AG04450 (cell line): ENCODE measurements at regions of chr7 and their contacts with region 1.

Region 1: DNA sequence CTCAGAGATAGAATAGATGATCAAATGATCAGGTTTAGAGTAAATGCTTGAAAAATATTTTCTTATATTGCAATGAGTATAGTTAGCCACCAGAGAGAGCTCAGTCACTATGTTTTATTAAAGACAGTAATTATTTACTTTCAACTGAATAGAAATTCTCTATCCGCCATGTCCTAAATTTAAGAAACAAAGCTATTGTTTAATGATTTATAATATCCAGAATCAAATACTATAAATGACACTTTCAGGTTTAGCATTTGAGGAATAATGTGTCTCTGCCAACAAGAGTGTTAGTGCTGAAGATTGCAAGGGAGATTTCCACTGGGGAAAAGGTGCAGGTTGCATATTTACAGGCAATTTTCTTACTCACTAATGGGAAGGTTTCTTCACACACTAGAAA is 184.7 kb downstream of the DGKB start:
- DNase-seq: no peak
- H3K4me3 ChIP-seq: no peak overlapping the region
- H3K27ac ChIP-seq: no peak overlapping the region
- H3K27me3 ChIP-seq: no peaks in the 10 kb centered on the region
- CTCF ChIP-seq: peak; percentile 63

Region 2: GRCh38 chr7:14924398-14924797 is 206.6 kb after region 1 on chr7:
- CTCF ChIA-PET with region 1: interaction called, 29 read pairs
- POLR2A ChIA-PET with region 1: interaction called, 4 read pairs
- DNase-seq: no peak
- H3K4me3 ChIP-seq: no peak overlapping the region
- H3K27ac ChIP-seq: no peak overlapping the region
- H3K27me3 ChIP-seq: no peaks in the 10 kb centered on the region
- CTCF ChIP-seq: no peak

Region 3: GRCh38 chr7:15007507-15007906 is 289.7 kb after region 1 on chr7:
- CTCF ChIA-PET with region 1: interaction called, 11 read pairs
- POLR2A ChIA-PET with region 1: no interaction called
- DNase-seq: no peak
- H3K4me3 ChIP-seq: no peak overlapping the region
- H3K27ac ChIP-seq: no peak overlapping the region
- H3K27me3 ChIP-seq: no peaks in the 10 kb centered on the region
- CTCF ChIP-seq: peak; percentile 46

Region 4: GRCh38 chr7:15015545-15016326 is 297.9 kb after region 1 on chr7:
- CTCF ChIA-PET with region 1: interaction called, 171 read pairs
- POLR2A ChIA-PET with region 1: no interaction called
- DNase-seq: peak; percentile 27
- H3K4me3 ChIP-seq: peak overlapping the region; percentile 10; the same call in 1 of the 2 replicates
- H3K27ac ChIP-seq: no peak overlapping the region
- H3K27me3 ChIP-seq: no peaks in the 10 kb centered on the region
- CTCF ChIP-seq: peak; percentile 69

Region 5: GRCh38 chr7:15546272-15546792 is 828.5 kb after region 1 on chr7:
- CTCF ChIA-PET with region 1: no interaction called
- POLR2A ChIA-PET with region 1: no interaction called
- DNase-seq: no peak
- H3K4me3 ChIP-seq: no peak overlapping the region
- H3K27ac ChIP-seq: no peak overlapping the region
- H3K27me3 ChIP-seq: no peaks in the 10 kb centered on the region
- CTCF ChIP-seq: no peak